PC-9 (cell line): ENCODE measurements at regions of chr1 and their contacts with region 1.

Region 1: GRCh38 chr1:98478121-98478520 is 183.4 kb upstream of the SNX7 start:
- DNase-seq: no peak
- H3K4me3 ChIP-seq: no peak overlapping the region
- H3K27ac ChIP-seq: no peak overlapping the region
- H3K4me1 ChIP-seq: no peaks in the 10 kb centered on the region
- H3K27me3 ChIP-seq: no peaks in the 10 kb centered on the region
- CTCF ChIP-seq: no peak

Region 2: GRCh38 chr1:97137862-97138514 is 1340.1 kb before region 1 on chr1:
- CTCF ChIA-PET with region 1: no interaction called
- POLR2A ChIA-PET with region 1: no interaction called
- intact Hi-C with region 1: loop called (anchors 10 kb)
- DNase-seq: peak in 1 of 2 experiments; percentile 10
- H3K4me3 ChIP-seq: no peak overlapping the region
- H3K27ac ChIP-seq: no peak overlapping the region
- H3K4me1 ChIP-seq: no peaks in the 10 kb centered on the region
- H3K27me3 ChIP-seq: no peaks in the 10 kb centered on the region
- CTCF ChIP-seq: peak; percentile 76

Region 3: DNA sequence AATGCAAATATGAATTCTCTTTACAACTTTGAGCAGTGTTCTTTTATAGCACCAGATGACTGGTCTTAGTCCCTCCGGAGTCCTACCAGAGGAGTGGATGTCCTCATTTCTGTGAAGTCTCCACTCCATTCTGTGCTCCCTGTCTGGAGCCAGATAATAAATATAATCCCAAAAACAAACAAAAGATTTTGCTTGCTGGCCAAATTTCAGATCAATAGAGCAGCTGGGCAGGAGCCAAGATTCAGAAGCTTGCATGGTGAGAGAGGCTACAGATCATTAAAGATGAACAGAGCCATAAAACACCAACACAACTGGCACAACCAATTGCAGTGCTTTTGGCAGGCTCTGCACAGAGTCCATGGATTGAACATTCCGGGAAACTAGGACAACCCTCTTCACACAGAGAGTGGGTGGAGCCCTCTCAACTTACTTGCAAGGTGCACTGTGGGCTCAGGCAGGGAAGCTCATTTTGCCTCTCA is 48.1 kb before region 1 on chr1:
- CTCF ChIA-PET with region 1: no interaction called
- POLR2A ChIA-PET with region 1: no interaction called
- intact Hi-C with region 1: no loop called
- DNase-seq: no peak
- H3K4me3 ChIP-seq: no peak overlapping the region
- H3K27ac ChIP-seq: no peak overlapping the region
- H3K4me1 ChIP-seq: no peaks in the 10 kb centered on the region
- H3K27me3 ChIP-seq: no peaks in the 10 kb centered on the region
- CTCF ChIP-seq: no peak